Heart right ventricle (tissue), 16 donors: ENCODE measurements at regions of chr11 and their contacts with region 1.

Region 1: DNA sequence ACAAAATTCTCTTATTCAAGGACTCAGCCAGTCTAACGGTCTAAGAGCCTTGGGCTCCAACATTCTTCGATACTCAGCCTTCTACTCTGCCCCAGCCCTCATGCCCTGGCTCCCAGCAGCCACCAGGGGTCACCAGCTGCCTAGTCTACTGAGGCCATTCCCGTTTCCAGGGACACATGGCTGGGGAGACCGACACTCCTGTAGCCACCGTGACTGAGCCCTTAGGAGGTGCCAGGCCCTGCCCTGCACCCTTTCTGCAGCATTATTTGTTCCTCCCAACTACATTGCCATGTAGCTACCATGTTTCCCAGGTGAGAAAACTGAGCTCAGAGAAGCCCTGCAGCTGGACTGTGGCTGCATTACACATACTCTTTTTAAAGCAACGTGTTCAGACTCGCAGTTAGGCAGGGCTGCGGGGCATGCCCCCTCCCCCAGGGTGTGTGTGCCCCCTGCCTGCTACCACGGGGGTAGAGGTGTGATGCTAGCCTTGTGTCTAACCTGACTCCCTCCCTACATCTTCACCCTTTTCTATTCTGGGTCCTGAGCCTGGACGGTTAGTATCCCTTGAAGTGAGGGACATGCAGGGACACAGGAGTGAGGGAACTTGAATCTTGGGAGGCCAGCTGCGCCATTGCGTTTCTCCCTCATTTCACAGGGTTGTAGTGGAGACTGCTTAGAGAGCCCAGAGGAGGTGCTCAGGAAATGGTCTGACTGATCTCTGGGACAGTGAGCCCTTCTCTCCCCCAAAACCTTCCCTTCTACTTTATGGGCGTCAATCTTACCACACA is 17.5 kb downstream of the ATG16L2 start:
- DNase-seq: peak; percentile 87 to 90
- ATAC-seq: peak; percentile 74 to 86 (median 80)
- H3K4me3 ChIP-seq: no peak overlapping the region
- H3K27ac ChIP-seq: peak overlapping the region; percentile 86 to 95 (median 90)
- H3K4me1 ChIP-seq: peaks cover 35 to 83% (median 67%) of the 10 kb centered on the region in 9 donors
- H3K27me3 ChIP-seq: no peaks in the 10 kb centered on the region
- CTCF ChIP-seq: peak; percentile 90 to 98 (median 96)

Region 2: GRCh38 chr11:72924568-72925190 is 93.0 kb after region 1 on chr11:
- intact Hi-C with region 1: loop called in 2 of 10 experiments (anchors 5 to 10 kb)
- DNase-seq: no peak
- ATAC-seq: peak in 7 of 8 donors; percentile 45 to 82 (median 51)
- H3K4me3 ChIP-seq: no peak overlapping the region
- H3K27ac ChIP-seq: peak overlapping the region in 2 of 10 donors; percentile 13 to 54
- H3K4me1 ChIP-seq: peaks cover 0 to 64% (median 31%) of the 10 kb centered on the region in 9 donors
- H3K27me3 ChIP-seq: no peaks in the 10 kb centered on the region
- CTCF ChIP-seq: peak; percentile 21 to 75 (median 62)

Region 3: DNA sequence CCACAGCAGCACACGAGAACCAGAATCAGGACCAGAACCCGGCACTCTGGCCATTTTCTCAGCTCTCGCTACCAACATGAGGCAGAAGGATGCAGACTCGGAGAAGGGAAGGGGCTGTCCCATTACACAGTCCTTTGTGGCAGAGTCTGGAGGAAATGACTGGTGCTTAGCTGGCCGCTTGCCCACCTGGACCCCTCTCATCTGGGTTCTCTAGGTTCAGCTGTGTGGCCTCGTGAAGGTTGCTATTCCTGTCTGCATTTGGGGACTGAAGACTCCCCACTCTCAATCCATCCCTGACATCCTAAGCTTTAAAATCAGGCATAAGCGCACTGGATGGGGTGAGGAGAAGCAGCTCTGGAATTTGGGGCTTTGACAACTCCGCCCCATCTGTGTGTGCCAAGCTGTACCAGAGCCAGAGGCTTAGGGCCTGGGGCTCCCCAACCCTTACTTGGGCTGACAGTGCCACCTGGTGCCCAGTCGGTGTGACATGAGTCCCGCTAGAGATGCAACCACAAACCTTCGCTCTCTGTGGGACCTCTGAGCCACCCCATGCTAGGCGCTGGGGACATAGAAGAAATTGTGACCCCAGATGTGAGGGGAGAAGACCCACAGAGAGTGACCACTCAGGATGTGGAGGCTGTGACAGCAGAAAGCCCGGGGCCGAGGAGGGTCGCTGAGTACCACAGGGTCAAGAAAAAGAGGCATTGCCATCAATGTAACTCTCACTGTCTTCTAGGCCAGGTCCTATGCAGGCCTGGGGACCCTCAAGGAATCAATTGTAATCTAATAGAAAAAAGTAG is 346.3 kb after region 1 on chr11:
- intact Hi-C with region 1: loop called (anchors 1 to 5 kb)
- DNase-seq: peak; percentile 85 to 88
- ATAC-seq: peak; percentile 60 to 86 (median 74)
- H3K4me3 ChIP-seq: no peak overlapping the region
- H3K27ac ChIP-seq: peak overlapping the region; percentile 69 to 92 (median 86)
- H3K4me1 ChIP-seq: peaks cover 27 to 74% (median 51%) of the 10 kb centered on the region in 9 donors
- H3K27me3 ChIP-seq: no peaks in the 10 kb centered on the region
- CTCF ChIP-seq: peak; percentile 71 to 94 (median 86)

Region 4: GRCh38 chr11:73236854-73237253 is 405.1 kb after region 1 on chr11:
- intact Hi-C with region 1: loop called in 7 of 10 experiments (anchors 1 to 10 kb)
- DNase-seq: peak; percentile 54 to 69
- ATAC-seq: peak in 6 of 8 donors; percentile 7 to 52 (median 36)
- H3K4me3 ChIP-seq: no peak overlapping the region
- H3K27ac ChIP-seq: peak overlapping the region in 9 of 10 donors; percentile 57 to 90 (median 80)
- H3K4me1 ChIP-seq: peaks cover 25 to 84% (median 72%) of the 10 kb centered on the region in 9 donors
- H3K27me3 ChIP-seq: no peaks in the 10 kb centered on the region
- CTCF ChIP-seq: peak; percentile 34 to 75 (median 66)

Region 5: GRCh38 chr11:73249168-73249687 is 417.5 kb after region 1 on chr11:
- intact Hi-C with region 1: loop called in 4 of 10 experiments (anchors 5 kb)
- DNase-seq: no peak
- ATAC-seq: peak in 2 of 8 donors; percentile 18 to 37
- H3K4me3 ChIP-seq: no peak overlapping the region
- H3K27ac ChIP-seq: no peak overlapping the region
- H3K4me1 ChIP-seq: peaks cover 0 to 8% (median 0%) of the 10 kb centered on the region in 9 donors
- H3K27me3 ChIP-seq: no peaks in the 10 kb centered on the region
- CTCF ChIP-seq: no peak